MCF 10A (cell line): ENCODE measurements at regions of chr22 and their contacts with region 1.

Region 1: GRCh38 chr22:50341977-50342650 is 1.0 kb upstream of the PPP6R2 start:
- DNase-seq: peak; percentile 90
- H3K4me3 Mint-ChIP-seq: peak overlapping the region; percentile 69
- H3K27ac Mint-ChIP-seq: no peak overlapping the region
- H3K4me1 Mint-ChIP-seq: no peaks in the 10 kb centered on the region
- H3K27me3 Mint-ChIP-seq: no peaks in the 10 kb centered on the region
- CTCF ChIP-seq: peak; percentile 92

Region 2: DNA sequence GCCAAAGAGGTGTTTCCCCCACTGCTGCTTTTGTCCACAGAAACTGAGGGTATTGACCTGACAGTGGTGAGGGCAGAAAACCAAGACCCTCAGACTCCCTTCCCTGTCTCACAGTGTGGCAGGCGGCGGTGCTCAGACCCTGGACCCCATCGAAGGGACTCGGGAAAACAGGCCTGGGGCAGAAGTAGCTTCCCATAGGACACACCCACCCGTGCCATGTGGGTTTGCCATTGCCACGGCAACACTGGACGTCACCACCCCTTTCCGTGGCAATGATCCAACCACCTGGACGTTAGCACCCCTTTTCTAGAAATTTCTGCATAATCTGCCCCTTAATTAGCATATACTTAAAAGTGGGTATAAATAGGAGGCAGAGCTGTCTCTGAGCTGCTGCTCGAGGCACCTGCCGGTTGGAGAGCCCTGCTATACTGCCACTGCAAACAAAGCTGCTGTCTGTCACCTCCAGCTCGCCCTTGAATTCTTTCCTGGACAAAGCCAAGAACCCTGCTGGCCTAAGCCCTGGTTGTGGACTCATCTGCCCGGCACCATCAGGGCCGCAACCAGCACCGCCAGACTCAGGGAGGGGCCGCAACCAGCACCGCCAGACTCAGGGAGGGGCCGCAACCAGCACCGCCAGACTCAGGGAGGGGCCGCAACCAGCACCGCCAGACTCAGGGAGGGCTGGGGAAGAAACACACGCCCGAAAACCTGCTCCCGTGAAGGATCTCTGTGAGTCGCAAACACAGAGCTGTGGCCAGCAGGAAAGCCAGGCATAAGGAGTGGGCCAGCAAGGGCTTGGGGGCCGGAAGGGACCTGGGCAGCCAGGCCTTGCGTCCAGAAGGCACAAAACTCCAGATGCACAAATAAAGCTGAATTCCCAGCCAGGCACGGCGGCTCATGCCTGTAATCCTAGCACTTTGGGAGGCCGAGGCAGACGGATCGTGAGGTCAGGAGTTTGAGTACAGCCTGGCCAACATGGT is 267.3 kb before region 1 on chr22:
- CTCF ChIA-PET with region 1: no interaction called
- POLR2A ChIA-PET with region 1: no interaction called
- intact Hi-C with region 1: no loop called
- DNase-seq: peak; percentile 36
- H3K4me3 Mint-ChIP-seq: no peak overlapping the region
- H3K27ac Mint-ChIP-seq: no peak overlapping the region
- H3K4me1 Mint-ChIP-seq: no peaks in the 10 kb centered on the region
- H3K27me3 Mint-ChIP-seq: no peaks in the 10 kb centered on the region
- CTCF ChIP-seq: no peak

Region 3: GRCh38 chr22:50148991-50149721 is 193.0 kb before region 1 on chr22:
- CTCF ChIA-PET with region 1: no interaction called
- POLR2A ChIA-PET with region 1: no interaction called
- intact Hi-C with region 1: loop called (anchors 5 kb)
- DNase-seq: peak; percentile 89
- H3K4me3 Mint-ChIP-seq: peak overlapping the region; percentile 41
- H3K27ac Mint-ChIP-seq: no peak overlapping the region
- H3K4me1 Mint-ChIP-seq: peaks cover 7% of the 10 kb centered on the region
- H3K27me3 Mint-ChIP-seq: no peaks in the 10 kb centered on the region
- CTCF ChIP-seq: peak; percentile 94

Region 4: DNA sequence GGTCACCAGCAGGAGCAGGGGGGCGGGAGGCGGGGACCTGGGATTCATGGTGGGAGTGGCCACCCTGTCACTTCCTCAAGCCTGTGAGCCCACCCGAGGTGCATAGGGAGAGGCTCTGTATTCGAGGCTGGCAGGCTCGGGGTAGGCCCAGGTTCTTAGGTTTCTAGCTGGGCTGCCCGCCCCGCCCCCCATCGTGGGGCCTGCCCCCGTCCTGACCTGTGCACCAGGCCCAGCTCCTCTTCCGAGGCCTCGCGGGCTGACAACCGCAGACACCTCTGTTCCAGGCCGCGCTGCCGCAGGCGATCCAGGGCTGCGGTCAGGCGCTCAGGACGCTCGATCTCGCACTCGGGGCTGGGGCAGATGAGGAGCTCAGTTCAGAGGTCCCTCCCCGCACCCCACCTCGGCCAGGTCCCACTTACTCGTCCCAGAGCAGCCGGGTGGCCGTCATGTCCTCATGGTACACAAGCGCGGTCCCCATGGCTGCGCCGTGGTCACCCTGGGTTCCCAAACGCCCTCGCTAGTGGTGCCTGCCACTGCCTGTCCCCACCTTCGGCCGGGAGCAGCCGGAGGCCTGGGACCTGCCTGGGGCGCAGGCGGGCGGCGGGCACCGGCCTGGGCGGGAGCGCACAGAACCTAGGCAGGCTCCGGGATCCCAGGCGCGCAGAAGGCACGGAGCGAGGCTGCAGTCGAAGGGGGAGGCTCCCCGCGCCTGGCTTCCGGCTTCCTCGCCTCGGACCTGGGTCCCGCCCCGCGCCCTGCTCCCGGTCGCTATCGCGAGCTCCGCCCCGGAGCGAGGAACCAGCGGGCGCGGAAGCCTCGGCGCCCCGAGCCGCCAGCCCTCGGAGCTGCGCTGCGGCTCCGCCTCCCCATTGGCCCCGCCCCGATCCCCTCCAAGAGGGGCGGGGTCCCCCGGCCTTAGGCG is 91.3 kb before region 1 on chr22 and contains the start of gene HDAC10:
- CTCF ChIA-PET with region 1: interaction called, 24 read pairs
- POLR2A ChIA-PET with region 1: interaction called, 26 read pairs
- intact Hi-C with region 1: loop called (anchors 1 kb)
- DNase-seq: peak; percentile 68
- H3K4me3 Mint-ChIP-seq: peak within 1 kb of the TSS; percentile 72
- H3K27ac Mint-ChIP-seq: no peak within 1 kb of the TSS
- H3K4me1 Mint-ChIP-seq: no peaks in the 10 kb centered on the region
- H3K27me3 Mint-ChIP-seq: no peaks in the 10 kb centered on the region
- CTCF ChIP-seq: no peak
- total RNA-seq, gene HDAC10: 27.5 and 29.2 TPM in 2 replicates

Region 5: DNA sequence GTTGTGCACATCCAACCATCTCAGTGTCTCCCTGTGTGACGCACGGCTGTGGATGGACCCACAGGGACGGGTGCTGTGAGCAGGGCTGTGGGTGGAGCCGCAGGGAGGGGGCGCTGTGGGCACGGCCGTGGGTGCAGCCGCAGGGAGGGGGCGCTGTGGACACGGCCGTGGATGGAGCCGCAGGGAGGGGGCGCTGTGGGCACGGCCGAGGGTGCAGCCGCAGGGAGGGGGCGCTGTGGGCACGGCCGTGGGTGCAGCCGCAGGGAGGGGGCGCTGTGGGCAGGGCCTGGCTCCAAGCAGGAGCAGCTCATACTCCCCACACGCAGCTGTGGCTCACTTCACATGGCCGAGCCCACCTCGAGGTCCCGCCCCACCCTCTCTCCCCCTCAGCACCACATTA is 66.0 kb before region 1 on chr22:
- CTCF ChIA-PET with region 1: interaction called, 11 read pairs
- POLR2A ChIA-PET with region 1: interaction called, 8 read pairs
- intact Hi-C with region 1: loop called (anchors 1 kb)
- DNase-seq: no peak
- H3K4me3 Mint-ChIP-seq: no peak overlapping the region
- H3K27ac Mint-ChIP-seq: no peak overlapping the region
- H3K4me1 Mint-ChIP-seq: peaks cover 6% of the 10 kb centered on the region
- H3K27me3 Mint-ChIP-seq: no peaks in the 10 kb centered on the region
- CTCF ChIP-seq: peak; percentile 64

Region 6: DNA sequence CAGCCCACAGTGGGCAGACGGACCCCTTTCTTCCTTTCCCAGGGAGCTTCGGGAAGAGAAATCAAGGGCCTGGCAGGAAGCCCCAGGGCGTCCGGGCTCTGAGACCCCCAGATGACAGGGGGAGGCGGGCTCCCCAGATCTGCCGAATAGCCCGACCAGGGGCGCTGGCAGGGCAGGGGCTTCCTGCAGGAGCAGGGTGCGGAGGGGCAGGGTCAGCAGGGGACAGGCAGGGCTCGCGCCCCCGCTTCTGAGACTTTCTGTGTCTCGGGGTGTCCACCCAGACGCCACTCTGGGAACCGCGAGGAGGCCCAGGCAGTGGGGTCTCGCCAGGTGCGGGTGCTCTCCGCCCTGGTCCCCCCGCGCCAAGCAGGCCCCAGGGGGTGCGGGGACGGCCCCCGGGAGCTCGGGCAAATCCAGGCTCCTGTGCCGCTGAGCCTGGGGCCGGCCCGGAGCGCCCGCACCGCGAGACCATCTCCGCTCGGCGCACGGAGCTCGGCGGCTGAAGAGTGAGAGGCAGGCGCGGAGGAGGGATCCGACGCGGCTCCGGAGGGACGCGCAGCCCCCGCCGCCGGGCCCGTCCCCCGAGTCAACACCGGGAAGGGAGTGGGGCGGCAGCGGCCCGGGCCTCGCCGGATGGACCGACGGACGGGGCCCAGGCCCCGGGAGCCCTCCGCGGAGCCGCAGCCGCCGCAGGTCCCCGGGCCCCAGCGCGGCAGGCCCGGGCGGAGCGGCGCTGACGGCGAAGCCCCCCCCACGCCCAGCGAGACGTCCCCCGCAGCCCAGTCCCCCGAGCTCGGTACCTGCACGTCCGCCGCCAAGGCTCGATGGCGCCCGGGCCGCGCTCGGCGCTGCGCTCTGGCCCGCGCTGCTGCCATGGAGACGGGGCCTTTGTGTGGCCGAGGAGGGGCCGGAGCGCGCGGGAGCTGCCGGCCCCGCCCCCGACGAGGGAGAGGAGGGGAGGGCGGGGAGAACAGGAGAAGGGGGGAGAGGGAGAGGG is 35.1 kb before region 1 on chr22 and contains the start of gene PLXNB2:
- CTCF ChIA-PET with region 1: interaction called, 15 read pairs
- POLR2A ChIA-PET with region 1: interaction called, 4 read pairs
- intact Hi-C with region 1: no loop called
- DNase-seq: peak; percentile 70
- H3K4me3 Mint-ChIP-seq: peak within 1 kb of the TSS; percentile 81
- H3K27ac Mint-ChIP-seq: peak within 1 kb of the TSS; percentile 87
- H3K4me1 Mint-ChIP-seq: peaks cover 21% of the 10 kb centered on the region
- H3K27me3 Mint-ChIP-seq: no peaks in the 10 kb centered on the region
- CTCF ChIP-seq: no peak
- total RNA-seq, gene PLXNB2: 199 and 200 TPM in 2 replicates

Region 7: GRCh38 chr22:50620593-50621355 is 278.7 kb after region 1 on chr22:
- CTCF ChIA-PET with region 1: interaction called, 5 read pairs
- POLR2A ChIA-PET with region 1: no interaction called
- intact Hi-C with region 1: loop called (anchors 2 kb)
- DNase-seq: peak; percentile 17
- H3K4me3 Mint-ChIP-seq: peak overlapping the region; percentile 68
- H3K27ac Mint-ChIP-seq: no peak overlapping the region
- H3K4me1 Mint-ChIP-seq: peaks cover 26% of the 10 kb centered on the region
- H3K27me3 Mint-ChIP-seq: no peaks in the 10 kb centered on the region
- CTCF ChIP-seq: no peak